OCI-LY7 (cell line): ENCODE measurements at regions of chr20 and their contacts with region 1.

Region 1: DNA sequence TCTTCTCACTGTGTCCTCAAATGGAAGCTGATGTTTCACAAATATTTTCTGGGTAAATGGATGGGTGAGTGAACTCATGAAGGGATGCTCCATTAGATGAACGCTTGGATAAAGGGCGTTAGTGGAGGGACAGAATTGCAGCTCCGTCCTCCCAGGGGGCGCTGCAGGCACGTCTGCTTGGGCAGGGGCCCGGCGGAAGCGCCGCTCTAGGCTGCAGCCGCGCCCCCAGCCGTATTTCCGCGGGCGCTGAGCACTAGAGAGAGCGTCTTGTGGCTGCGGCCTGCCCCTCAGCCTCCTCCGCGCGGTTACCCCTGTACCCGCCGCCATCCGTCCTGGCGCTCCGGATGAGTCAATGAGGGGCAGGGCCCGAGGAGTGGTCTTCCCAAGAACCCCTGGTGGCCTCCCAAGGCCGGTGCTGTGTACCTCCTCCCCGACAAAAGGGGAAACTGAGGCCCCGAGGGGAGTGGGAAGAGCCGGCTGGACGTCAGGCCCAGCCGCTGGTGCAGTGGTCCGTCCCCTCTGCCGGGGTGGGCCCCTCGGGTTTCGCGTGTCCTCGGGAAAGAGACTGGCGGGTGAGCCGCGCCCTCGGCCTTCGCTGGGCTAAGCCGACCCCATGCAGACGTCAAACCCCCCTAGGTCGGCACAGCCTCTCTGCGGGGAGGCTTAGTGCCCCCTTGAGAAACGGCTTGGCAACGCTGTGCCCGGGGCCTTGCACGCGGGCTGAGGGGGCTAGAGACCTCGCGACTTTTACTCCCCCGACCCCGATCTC is 11.5 kb upstream of the SNHG17 start:
- DNase-seq: peak; percentile 97
- H3K4me3 ChIP-seq: peak overlapping the region; percentile 88
- H3K27ac ChIP-seq: peak overlapping the region; percentile 69
- H3K4me1 ChIP-seq: peaks cover 21% of the 10 kb centered on the region
- CTCF ChIP-seq: peak; percentile 92

Region 2: DNA sequence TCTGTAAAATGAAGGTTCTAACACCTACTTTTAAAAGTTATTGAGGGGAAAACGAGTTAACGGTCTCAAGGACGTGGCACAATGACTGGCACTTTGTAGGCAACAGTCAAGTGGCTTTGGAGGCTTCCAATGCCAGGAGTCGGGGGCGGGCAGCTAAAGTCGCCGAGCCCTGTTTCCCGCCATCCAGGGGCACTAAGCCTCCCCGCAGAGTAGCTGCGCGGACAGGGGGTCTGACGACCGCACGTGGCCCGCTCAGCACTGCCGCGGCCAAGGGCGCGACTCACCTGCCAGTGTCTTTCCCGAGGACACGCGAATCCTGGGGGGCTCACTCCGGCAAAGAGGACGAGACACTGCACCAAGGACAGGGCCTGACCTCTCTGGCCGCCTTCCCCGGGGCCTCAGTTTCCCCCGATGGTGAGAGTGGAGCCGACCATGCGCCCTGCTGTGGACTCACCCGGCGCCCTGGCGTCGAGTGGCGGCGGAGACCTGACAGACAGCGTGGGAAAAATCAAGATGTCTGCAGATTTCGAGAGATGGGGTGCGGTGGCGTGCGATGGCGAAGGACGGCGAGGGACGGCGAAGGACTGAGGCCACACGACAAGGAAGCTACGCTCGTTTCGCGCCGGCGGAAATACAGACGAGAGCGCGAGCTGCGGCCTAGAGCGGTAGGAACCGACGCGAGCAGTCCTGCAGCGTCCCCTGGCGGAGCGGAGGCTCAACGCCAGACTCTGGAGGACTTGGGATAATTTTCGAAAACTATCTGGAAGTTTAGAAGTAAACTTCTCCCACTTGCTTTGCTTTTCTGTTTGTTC is 11.7 kb before region 1 on chr20 and contains the start of gene SNHG17:
- CTCF ChIA-PET with region 1: interaction called, 6 read pairs
- POLR2A ChIA-PET with region 1: interaction called, 27 read pairs
- intact Hi-C with region 1: loop called (anchors 1 kb)
- DNase-seq: peak; percentile 96
- H3K4me3 ChIP-seq: peak within 1 kb of the TSS; percentile 85
- H3K27ac ChIP-seq: peak within 1 kb of the TSS; percentile 59
- H3K4me1 ChIP-seq: peaks cover 26% of the 10 kb centered on the region
- CTCF ChIP-seq: peak; percentile 98
- total RNA-seq, gene SNHG17: 30.0 and 49.1 TPM in 2 replicates

Region 3: DNA sequence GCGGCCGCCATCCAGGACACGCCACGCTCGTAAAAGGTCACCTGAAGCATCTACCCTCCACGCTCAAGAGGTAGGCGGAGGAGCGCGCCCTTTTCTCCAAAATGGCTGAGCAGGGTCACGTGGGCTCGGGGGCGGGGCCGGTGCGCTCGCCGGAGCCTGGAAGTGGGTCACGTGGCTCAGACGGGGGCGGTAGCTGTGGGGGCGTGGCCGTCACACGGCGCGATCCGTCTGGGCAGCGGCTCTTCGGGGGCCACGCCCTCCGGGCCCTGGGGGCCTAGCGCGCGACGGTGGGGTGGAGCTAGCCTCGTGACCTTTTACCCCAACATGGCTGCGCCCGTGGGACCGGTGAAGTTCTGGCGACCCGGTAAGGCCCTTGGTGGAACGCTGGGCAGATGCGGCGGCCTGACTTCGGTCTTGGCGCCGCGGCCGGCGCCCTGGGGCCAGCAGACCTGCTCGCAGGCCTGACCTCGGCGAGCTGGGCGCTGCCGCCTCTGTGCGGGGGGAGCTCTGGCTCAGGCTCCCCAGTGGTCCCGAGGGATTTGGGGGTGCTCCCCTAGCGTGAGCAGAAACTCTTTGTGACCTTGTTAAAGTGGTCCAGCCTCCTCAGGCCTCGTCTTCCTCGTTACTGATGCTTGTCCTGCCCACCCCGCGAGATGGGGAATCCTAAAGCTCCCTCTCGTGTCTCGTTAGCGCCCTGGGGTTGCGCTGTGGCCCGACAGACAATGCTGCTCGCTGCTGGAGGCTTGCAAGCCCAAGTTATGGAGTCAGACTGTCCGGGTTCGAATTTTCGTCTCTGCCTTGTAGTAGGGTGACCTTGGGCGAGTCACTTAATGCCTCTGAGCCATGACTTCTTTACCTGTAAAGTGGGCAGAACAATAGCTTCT is 515.7 kb after region 1 on chr20 and contains the start of gene DHX35:
- CTCF ChIA-PET with region 1: no interaction called
- POLR2A ChIA-PET with region 1: no interaction called
- intact Hi-C with region 1: loop called (anchors 10 kb)
- DNase-seq: peak; percentile 98
- H3K4me3 ChIP-seq: peak within 1 kb of the TSS; percentile 90
- H3K27ac ChIP-seq: peak within 1 kb of the TSS; percentile 80
- H3K4me1 ChIP-seq: peaks cover 22% of the 10 kb centered on the region
- CTCF ChIP-seq: peak; percentile 70
- total RNA-seq, gene DHX35: 13.7 and 15.6 TPM in 2 replicates